AG04449 (cell line): ENCODE measurements at regions of chr2 and their contacts with region 1.

Region 1: DNA sequence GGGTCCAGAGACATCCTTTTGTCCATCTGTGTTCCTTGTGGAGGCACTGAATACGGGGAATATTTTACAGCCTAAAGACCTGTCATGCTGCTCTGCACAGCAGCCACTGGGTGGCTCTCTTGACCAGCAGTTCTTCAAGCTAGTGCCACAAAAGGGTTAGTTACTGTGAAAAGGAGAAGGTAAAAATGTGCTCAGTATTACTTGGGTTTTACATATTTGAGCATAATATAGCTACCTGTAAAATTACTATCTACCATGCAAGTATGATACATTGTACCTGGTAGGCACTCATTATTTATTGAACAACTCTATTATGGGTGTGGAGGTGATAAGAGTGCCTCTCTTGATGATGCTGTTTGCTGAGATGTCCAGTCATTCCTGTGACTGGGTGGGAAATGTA is 23.6 kb downstream of the FZD5 start:
- DNase-seq: peak; percentile 26
- H3K4me3 ChIP-seq: no peak overlapping the region
- CTCF ChIP-seq: peak; percentile 87

Region 2: GRCh38 chr2:207734264-207734635 is 11.9 kb before region 1 on chr2:
- CTCF ChIA-PET with region 1: interaction called, 37 read pairs
- POLR2A ChIA-PET with region 1: no interaction called
- DNase-seq: no peak
- H3K4me3 ChIP-seq: no peak overlapping the region
- CTCF ChIP-seq: peak; percentile 67

Region 3: GRCh38 chr2:207974216-207974605 is 228.1 kb after region 1 on chr2:
- CTCF ChIA-PET with region 1: interaction called, 59 read pairs
- POLR2A ChIA-PET with region 1: interaction called, 3 read pairs
- DNase-seq: no peak
- H3K4me3 ChIP-seq: no peak overlapping the region
- CTCF ChIP-seq: no peak

Region 4: GRCh38 chr2:208072250-208072892 is 326.2 kb after region 1 on chr2:
- CTCF ChIA-PET with region 1: interaction called, 332 read pairs
- POLR2A ChIA-PET with region 1: interaction called, 4 read pairs
- DNase-seq: no peak
- H3K4me3 ChIP-seq: no peak overlapping the region
- CTCF ChIP-seq: peak; percentile 77